ENCODE measurements at regions of chr3 and their contacts with region 1.

Region 1: DNA sequence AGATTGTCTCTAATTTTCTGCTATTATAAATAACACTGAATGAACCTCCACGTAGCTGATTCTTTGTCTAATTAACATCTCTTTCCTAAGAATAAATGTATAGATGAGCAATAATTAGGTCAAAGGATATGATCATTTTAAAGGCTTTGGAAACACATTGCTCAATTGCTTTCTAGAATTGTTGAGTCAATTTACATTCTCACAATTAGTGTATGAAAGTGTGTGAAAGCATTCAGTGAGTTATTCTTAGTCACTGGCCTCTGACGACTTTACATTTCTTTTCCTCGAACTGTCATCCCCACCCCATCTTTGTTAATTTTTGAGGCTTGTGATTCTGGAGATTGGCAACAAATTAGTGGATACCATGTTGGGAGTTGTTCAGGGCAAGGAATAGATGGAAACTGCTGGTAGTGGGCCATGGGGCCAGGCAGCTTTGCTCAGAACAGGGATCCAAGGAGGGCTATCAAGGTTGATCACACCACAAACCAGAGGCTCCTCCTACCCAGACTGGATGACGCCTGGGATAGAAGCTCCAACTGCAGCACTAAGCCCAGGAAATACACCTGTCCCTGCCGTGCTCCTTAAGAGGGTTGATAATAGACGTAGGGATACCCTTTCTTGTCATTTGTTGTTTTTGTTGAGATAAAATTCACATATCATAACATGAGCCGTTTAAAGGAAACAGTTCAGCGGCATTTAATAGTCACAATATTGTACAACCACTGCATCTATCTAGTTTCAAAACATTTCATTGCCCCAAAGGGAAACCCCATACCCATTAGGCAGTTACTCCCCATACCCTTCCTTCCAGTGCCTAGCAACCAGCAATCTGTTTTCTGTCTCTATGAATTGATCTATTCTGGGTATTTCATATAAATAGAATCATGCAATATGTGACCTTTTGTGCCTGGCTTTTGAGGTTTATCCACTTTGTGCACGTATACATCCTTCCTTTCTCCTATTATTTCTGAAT is 27.9 kb downstream of the EIF1B start:
- DNase-seq: peak; percentile 36
- ATAC-seq: peak; percentile 86
- H3K4me3 Mint-ChIP-seq: no peak overlapping the region
- H3K27ac Mint-ChIP-seq: peak overlapping the region; percentile 69
- H3K4me1 Mint-ChIP-seq: peaks cover 20% of the 10 kb centered on the region
- H3K27me3 Mint-ChIP-seq: peaks cover 7% of the 10 kb centered on the region

Region 2: DNA sequence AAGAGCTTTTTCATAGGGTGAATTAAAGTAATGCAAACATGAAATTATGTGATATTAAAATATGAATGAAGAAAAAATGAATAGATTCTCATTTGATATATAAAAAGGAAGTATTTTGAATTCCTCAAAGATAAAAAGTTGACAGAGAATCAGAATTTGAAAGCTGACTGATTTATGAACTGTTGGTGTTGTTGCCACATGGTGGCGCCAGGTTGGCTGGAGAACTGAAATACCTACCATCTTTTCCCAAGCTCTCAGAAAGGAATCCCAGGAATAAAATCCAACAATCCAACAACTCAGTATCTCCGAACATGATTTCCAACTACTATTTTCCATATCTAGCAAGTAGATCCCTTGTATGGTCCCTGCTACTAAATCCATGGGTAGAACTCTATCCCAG is 524.9 kb before region 1 on chr3:
- CTCF ChIA-PET with region 1: no interaction called
- POLR2A ChIA-PET with region 1: no interaction called
- intact Hi-C with region 1: no loop called
- DNase-seq: no peak
- ATAC-seq: no peak
- H3K4me3 Mint-ChIP-seq: no peak overlapping the region
- H3K27ac Mint-ChIP-seq: no peak overlapping the region
- H3K4me1 Mint-ChIP-seq: peaks cover 16% of the 10 kb centered on the region
- H3K27me3 Mint-ChIP-seq: peaks cover 50% of the 10 kb centered on the region

Region 3: DNA sequence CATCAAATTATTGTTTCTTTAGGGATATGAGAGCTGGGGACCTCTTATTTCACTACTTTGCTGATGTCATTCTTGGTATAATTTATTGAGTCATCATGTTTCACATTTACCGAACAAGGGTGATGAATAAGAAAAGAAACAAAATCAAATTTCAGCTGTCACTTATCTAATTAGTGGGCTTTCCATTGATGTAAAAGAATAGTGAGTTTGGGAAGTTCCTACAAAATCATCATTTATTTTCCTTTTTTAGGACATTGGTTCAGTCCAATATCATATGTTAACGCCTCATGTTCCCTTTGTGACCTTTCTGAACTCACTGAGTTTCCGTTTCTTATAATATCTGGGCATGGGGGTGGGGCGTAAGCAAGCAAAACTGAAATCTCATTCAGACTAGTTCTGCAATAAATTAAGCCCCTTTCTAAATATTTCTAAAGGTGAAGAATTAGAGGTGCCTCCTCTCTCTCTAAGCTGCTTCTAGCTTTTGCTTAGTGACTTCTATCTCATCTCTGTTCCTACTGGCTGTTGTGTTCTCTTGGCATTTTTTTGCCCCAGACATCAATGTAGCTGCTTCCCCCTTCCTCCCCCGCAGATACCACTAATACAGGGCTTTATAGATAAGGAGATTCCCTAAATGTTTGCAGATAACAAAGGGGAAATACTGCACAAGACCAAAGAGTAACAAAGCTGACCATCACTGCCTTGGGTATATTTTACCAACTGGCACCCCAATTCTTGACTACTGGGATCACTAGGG is 623.9 kb after region 1 on chr3:
- CTCF ChIA-PET with region 1: no interaction called
- POLR2A ChIA-PET with region 1: no interaction called
- intact Hi-C with region 1: loop called in 1 of 2 experiments (anchors 1 kb)
- DNase-seq: peak; percentile 20
- ATAC-seq: peak; percentile 83
- H3K4me3 Mint-ChIP-seq: no peak overlapping the region
- H3K27ac Mint-ChIP-seq: no peak overlapping the region
- H3K4me1 Mint-ChIP-seq: peaks cover 11% of the 10 kb centered on the region
- H3K27me3 Mint-ChIP-seq: peaks cover 16% of the 10 kb centered on the region

Region 4: DNA sequence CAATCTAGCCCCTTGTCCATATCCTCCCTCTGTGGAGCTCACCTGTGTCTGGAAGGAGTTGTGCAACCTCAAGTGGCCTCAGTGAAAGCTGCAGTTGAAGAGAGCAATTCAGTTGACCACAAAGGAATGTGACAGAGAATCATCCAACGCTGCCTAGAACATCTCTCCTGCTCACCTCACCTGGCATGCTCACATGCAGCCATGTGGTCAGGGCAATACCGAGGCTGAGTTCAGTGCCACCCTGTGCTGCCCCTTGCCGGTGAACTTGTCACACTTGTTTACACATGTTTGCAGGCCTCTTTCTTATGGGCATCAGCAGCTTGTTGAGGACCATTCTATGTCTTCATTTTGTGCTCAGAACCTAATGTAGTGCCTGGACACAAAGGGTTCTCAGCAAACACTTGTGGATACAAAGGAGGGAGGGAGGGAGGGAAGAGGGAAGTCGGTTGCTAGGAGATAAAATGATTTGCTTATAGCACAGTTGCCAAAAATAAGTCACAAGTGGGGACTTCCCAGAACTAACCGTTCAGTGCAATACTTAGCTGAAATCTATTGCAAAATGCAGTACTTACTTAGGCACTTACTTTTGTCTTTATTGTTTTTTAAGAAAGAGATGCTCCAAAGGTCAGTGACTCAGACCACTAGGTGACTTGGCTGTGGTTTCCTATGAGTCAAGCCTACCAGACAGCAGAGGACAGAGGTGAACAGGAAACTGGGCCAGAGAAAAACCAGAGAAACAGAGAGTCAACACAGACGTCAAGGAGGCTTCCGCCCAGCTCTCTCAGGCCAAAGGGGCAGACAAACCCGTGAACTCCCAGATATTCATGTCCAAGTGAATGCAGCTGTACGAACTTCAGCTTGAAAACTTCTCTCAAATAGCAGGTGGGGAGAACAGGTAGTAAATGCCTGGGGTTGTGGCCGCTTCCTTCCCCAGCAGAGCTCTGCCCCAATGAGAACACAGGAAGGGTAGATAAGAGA is 634.1 kb after region 1 on chr3:
- CTCF ChIA-PET with region 1: no interaction called
- POLR2A ChIA-PET with region 1: no interaction called
- intact Hi-C with region 1: loop called in 1 of 2 experiments (anchors 2 kb)
- DNase-seq: peak; percentile 66
- ATAC-seq: peak; percentile 93
- H3K4me3 Mint-ChIP-seq: peak overlapping the region; percentile 4
- H3K27ac Mint-ChIP-seq: peak overlapping the region; percentile 79
- H3K4me1 Mint-ChIP-seq: peaks cover 23% of the 10 kb centered on the region
- H3K27me3 Mint-ChIP-seq: peaks cover 27% of the 10 kb centered on the region

Region 5: DNA sequence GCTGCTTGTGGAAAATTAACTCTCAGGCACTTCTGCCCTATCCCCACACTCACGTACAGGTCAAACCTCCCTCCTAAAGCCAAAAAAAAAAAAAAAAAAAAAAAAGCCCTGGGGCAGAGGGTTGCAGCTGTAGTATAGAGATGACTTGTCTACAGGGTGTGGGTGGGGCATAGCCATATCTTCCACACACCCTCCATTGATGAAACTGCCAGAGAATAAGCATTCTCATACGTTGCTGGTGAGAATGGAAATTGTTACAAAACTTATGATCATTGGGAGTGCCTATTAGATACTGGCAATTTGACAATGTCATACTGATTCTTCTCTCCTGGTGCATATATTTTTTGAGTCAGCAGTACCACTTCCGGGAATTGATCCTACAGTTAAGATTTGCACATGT is 850.8 kb after region 1 on chr3:
- CTCF ChIA-PET with region 1: no interaction called
- POLR2A ChIA-PET with region 1: interaction called, 6 read pairs
- intact Hi-C with region 1: loop called in 1 of 2 experiments (anchors 2 kb)
- DNase-seq: peak; percentile 64
- ATAC-seq: peak; percentile 97
- H3K4me3 Mint-ChIP-seq: no peak overlapping the region
- H3K27ac Mint-ChIP-seq: peak overlapping the region; percentile 34
- H3K4me1 Mint-ChIP-seq: peaks cover 27% of the 10 kb centered on the region
- H3K27me3 Mint-ChIP-seq: peaks cover 6% of the 10 kb centered on the region

Region 6: DNA sequence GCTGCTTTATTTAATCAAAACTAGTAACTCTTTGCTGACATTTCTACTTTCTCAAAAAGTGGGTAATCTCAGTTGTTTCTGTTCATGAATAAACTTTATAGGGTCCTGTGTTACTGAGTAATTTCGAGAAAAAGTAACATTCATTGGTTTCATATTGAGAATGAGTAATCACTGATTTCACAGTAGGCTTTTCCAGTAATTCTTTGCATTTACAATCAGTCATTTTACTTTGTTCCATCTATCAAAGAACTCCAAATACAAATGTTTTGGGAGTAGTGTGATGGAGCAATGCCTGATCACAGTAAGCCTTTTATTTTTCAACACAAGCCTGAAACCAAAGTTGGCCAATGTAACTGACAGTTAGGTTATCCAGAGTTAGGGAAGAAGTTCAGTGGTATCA is 1270.9 kb after region 1 on chr3:
- CTCF ChIA-PET with region 1: no interaction called
- POLR2A ChIA-PET with region 1: no interaction called
- intact Hi-C with region 1: loop called in 1 of 2 experiments (anchors 2 kb)
- DNase-seq: no peak
- ATAC-seq: peak; percentile 84
- H3K4me3 Mint-ChIP-seq: peak overlapping the region; percentile 23
- H3K27ac Mint-ChIP-seq: peak overlapping the region; percentile 73
- H3K4me1 Mint-ChIP-seq: peaks cover 18% of the 10 kb centered on the region
- H3K27me3 Mint-ChIP-seq: no peaks in the 10 kb centered on the region

Region 7: DNA sequence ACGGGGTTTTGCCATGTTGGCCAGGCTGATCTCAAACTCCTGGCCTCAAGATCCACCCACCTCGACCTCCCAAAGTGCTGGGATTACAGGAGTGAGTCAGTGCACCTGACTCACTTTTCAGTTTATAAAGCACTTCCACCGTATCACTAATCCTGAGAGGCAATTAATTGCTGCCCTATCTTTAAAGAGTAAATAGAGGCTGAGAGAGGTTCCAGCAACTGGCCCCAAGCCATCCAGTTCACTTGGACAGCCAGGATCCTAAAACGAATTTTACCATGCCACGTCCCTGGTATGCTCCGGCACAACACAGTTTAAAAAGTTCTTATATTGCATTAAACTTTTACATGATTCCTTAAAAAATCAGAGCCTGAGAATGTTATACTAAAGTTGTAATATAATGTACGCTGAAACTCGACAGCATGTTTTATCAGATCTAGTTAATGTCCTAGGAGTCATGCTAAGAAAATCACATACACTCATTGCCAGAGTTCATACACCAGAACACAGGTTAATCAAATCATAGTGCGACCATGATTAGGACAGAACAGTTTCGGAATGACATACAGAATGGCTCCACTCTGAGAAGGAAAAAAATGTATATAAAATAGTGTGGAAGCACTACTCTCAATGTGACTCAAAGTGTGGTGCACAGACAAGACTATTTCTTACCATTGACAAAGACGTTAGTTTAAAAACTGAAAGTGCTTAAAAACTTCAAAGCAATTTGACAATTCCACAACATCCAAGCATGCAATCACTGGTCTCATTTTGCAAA is 1499.1 kb after region 1 on chr3:
- CTCF ChIA-PET with region 1: no interaction called
- POLR2A ChIA-PET with region 1: no interaction called
- intact Hi-C with region 1: loop called in 1 of 2 experiments (anchors 1 kb)
- DNase-seq: peak; percentile 32
- ATAC-seq: peak; percentile 90
- H3K4me3 Mint-ChIP-seq: no peak overlapping the region
- H3K27ac Mint-ChIP-seq: peak overlapping the region; percentile 13
- H3K4me1 Mint-ChIP-seq: peaks cover 20% of the 10 kb centered on the region
- H3K27me3 Mint-ChIP-seq: no peaks in the 10 kb centered on the region

Region 8: DNA sequence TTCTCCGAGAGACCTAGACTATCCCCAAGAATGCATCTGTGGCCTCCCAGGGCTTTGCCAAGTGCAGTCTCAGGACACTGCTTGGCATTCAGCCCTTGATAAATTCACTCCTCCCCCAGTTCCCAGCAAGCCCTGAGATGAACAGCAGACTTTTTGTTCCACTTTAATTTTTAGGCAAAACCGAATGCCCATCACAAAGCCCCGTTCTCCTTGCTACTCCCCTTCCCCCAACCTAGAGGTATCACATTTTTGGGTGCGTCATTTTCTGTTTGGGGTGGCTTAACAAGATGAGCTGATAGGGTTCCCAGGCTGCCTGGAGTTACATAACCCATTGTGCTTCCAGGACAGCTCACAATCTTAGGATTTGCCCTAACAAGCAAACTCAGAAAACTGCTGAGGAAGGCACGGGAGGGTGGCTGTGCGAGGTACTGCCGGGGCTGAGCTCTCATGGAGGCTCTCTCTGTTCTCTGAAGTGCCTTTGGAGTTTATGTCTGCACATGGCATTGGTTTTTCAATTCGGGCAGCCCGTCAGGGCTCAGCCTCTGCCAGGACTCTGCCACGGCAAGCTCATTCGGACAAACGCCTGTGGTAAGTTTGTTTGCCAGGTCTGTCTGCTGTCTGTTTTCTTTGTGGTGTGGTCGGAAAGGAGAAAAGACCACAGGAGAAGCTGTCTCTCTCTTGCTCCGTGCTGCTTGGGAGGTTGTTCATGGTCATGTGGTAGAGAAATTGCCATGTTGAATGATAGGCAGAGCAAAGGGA is 1753.7 kb after region 1 on chr3 and contains the start of gene TRAK1:
- CTCF ChIA-PET with region 1: no interaction called
- POLR2A ChIA-PET with region 1: no interaction called
- intact Hi-C with region 1: loop called in 1 of 2 experiments (anchors 10 kb)
- DNase-seq: no peak
- ATAC-seq: no peak
- H3K4me3 Mint-ChIP-seq: no peak within 1 kb of the TSS
- H3K27ac Mint-ChIP-seq: no peak within 1 kb of the TSS
- H3K4me1 Mint-ChIP-seq: peaks cover 44% of the 10 kb centered on the region
- H3K27me3 Mint-ChIP-seq: no peaks in the 10 kb centered on the region
- total RNA-seq, gene TRAK1: 22.4 to 23.6 TPM